ENCODE measurements at regions of chr1 and their contacts with region 1.

Region 1: DNA sequence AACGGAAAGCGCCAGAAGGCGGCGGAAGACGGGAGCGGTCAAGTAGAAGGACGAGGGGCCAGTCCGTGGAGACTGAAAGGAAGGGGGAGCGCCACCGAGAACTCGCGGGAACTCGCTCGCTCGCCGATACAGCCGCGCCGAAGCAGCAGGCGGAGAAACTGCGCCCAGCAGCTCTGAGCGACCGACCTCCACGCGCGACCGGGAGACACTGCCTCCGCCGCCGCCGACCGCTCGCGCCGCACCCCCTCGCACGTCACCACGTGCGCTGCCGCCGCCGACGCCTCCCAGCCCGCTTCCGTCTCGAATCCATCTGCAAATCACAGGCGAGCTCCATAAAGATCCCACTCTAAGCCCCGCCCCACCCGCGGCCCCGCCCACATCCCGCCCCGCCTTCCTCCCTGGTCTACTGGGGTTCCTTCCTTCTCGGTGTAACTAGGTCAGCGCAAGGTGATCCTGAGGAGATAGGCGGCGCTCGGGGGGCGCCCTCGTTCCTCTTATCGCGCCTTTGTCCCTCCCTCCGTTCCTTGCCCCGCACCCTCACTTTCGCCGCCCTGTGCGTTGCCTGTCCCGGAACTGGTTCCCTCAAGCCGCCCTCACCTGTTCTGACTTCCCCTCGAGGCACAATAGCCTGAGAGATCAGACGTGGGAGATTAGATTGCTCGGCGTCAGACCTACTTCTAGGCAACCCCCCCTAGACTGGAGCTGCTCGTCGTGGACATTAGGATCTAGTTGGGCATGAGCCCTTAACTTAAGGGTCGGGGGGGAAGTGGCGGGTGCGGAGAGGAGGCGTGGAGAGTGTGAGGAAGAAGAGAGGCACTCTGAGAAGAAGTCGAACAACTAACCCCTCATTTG is at the start of gene IVNS1ABP:
- DNase-seq: peak; percentile 96
- H3K4me3 ChIP-seq: peak within 1 kb of the TSS; percentile 66 to 98 (median 94)
- H3K27ac ChIP-seq: peak within 1 kb of the TSS; percentile 87
- H3K4me1 ChIP-seq: peaks cover 36% of the 10 kb centered on the region
- H3K27me3 ChIP-seq: no peaks in the 10 kb centered on the region
- CTCF ChIP-seq: peak in 1 of 2 donors; percentile 19
- POLR2A ChIP-seq: peak; percentile 96
- total RNA-seq, gene IVNS1ABP: 75.3 and 81.6 TPM in 2 replicates

Region 2: DNA sequence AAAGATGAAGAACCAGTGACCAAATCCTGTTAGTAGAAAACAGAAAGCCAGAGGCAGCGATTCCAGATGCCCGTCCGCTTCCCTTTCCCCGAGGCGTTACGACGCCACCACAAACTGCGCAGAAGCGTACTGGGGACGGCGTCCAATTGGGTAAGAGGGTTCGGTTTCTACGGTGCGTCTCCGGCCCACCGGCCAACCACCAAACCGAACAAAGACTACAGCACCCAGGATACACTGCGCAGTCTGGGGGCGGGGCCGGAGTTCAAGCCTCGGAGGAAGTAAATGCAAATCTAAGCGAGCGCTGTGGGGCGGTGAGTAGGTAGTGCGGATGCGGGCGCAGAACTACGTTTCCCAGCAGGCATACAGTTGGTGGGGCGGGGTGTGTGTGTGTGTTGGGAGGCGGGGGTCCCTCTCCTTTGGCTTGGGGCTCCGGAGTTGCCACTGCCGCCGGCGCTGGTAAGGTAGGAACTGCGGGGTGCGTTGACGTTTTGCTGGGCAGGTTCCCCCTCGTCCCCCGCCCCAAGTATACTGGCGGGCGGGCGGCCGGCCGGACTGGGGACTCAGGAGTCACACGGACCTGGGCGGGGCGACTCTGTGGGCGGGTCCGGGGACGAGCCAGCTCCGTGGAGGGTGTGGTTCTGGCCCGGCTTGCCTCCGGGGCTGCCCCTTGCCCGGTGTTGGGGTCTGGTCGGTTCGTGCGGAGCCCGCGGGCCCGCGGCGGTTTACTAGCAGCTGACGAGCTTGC is 160.2 kb before region 1 on chr1 and contains the starts of genes SWT1 and TRMT1L:
- CTCF ChIA-PET with region 1: no interaction called
- POLR2A ChIA-PET with region 1: no interaction called
- dilution Hi-C with region 1: no loop called
- intact Hi-C with region 1: loop called (anchors 2 kb)
- DNase-seq: peak; percentile 100
- H3K4me3 ChIP-seq: peak within 1 kb of the TSS; percentile 60 to 95 (median 92)
- H3K27ac ChIP-seq: peak within 1 kb of the TSS; percentile 85
- H3K4me1 ChIP-seq: peaks cover 19% of the 10 kb centered on the region
- H3K27me3 ChIP-seq: no peaks in the 10 kb centered on the region
- CTCF ChIP-seq: no peak
- POLR2A ChIP-seq: peak; percentile 88
- total RNA-seq, gene SWT1: 3.6 and 4.3 TPM in 2 replicates
- total RNA-seq, gene TRMT1L: 12.8 and 16.1 TPM in 2 replicates

Region 3: GRCh38 chr1:185426848-185427247 is 109.6 kb after region 1 on chr1:
- CTCF ChIA-PET with region 1: interaction called, 7 read pairs
- POLR2A ChIA-PET with region 1: interaction called, 5 read pairs
- dilution Hi-C with region 1: no loop called
- intact Hi-C with region 1: loop called (anchors 1 kb)
- DNase-seq: peak; percentile 92
- H3K4me3 ChIP-seq: no peak overlapping the region
- H3K27ac ChIP-seq: peak overlapping the region; percentile 87
- H3K4me1 ChIP-seq: peaks cover 18% of the 10 kb centered on the region
- H3K27me3 ChIP-seq: no peaks in the 10 kb centered on the region
- CTCF ChIP-seq: no peak
- POLR2A ChIP-seq: no peak

Region 4: DNA sequence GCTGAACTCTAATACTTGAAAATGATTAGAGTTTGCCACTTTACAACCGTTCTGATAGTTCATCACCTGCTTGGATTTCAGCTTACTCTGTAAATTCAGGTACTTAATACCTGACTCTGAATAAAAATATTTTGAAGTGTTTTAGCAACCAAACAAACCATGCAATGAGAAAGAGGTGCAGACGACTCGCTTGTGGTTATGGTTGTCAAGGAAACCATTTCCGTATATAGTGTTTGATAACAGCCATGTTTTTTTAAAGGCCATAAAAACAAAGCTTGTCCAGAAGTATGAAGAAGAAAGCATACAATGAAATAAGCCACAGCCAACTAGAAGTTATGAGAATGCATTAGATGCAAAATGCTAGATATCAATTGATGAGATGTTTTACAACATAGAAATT is 249.7 kb after region 1 on chr1:
- CTCF ChIA-PET with region 1: interaction called, 3 read pairs
- POLR2A ChIA-PET with region 1: no interaction called
- dilution Hi-C with region 1: no loop called
- intact Hi-C with region 1: loop called (anchors 1 kb)
- DNase-seq: peak; percentile 87
- H3K4me3 ChIP-seq: no peak overlapping the region
- H3K27ac ChIP-seq: peak overlapping the region; percentile 38
- H3K4me1 ChIP-seq: peaks cover 13% of the 10 kb centered on the region
- H3K27me3 ChIP-seq: no peaks in the 10 kb centered on the region
- CTCF ChIP-seq: no peak
- POLR2A ChIP-seq: no peak

Region 5: GRCh38 chr1:185670187-185670627 is 352.9 kb after region 1 on chr1:
- CTCF ChIA-PET with region 1: interaction called, 31 read pairs
- POLR2A ChIA-PET with region 1: interaction called, 4 read pairs
- dilution Hi-C with region 1: no loop called
- intact Hi-C with region 1: loop called (anchors 1 kb)
- DNase-seq: peak; percentile 74
- H3K4me3 ChIP-seq: no peak overlapping the region
- H3K27ac ChIP-seq: no peak overlapping the region
- H3K4me1 ChIP-seq: peaks cover 17% of the 10 kb centered on the region
- H3K27me3 ChIP-seq: no peaks in the 10 kb centered on the region
- CTCF ChIP-seq: peak; percentile 44 to 57
- POLR2A ChIP-seq: no peak